ENCODE measurements at regions of chr5 and their contacts with region 1.

Region 1: GRCh38 chr5:150398722-150399523 is 13.8 kb downstream of the CD74 start:
- DNase-seq: peak; percentile 37 to 65 (median 56)
- H3K4me3 ChIP-seq: no peak overlapping the region
- H3K4me3 Mint-ChIP-seq: no peak overlapping the region
- H3K27ac ChIP-seq: peak overlapping the region; percentile 29 to 40
- H3K27ac Mint-ChIP-seq: peak overlapping the region; percentile 15 to 78 (median 66)
- H3K4me1 ChIP-seq: no peaks in the 10 kb centered on the region
- H3K4me1 Mint-ChIP-seq: peaks cover 4% of the 10 kb centered on the region
- H3K27me3 ChIP-seq: no peaks in the 10 kb centered on the region
- H3K27me3 Mint-ChIP-seq: peaks cover 0 to 2% (median 1%) of the 10 kb centered on the region in 3 donors
- CTCF ChIP-seq: peak; percentile 63

Region 2: DNA sequence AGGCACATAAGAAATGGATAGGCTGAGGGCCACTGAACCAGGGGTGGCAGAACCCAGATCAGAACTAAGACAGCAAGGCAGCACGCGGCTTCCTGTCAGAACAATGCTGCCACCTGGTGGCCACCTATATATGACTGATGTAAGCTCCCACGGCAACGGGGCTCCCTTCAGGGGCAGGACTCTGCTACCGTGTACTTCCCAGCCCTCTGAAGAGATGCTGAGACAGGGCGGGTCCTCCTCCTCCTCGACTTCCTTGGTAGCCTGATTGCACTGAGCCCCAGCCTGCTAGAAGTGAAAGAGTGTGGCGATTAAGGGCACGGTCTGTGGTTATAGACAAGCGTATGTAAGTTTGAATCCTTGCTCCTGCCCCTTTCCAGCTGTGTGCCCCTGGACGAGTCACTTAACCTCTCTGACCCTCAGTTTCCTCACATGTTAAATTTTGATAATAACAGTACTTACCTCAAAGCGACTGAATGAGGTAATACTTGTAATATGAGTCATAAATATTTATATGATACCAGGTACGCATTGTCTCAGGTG is 37.3 kb after region 1 on chr5:
- intact Hi-C with region 1: loop called (anchors 5 kb)
- DNase-seq: peak; percentile 84 to 90 (median 88)
- H3K4me3 ChIP-seq: no peak overlapping the region
- H3K4me3 Mint-ChIP-seq: peak overlapping the region in 1 of 2 donors; percentile 64
- H3K27ac ChIP-seq: no peak overlapping the region
- H3K27ac Mint-ChIP-seq: peak overlapping the region in 2 of 7 donors; percentile 5 to 63
- H3K4me1 ChIP-seq: peaks cover 0 to 4% of the 10 kb centered on the region in 2 donors
- H3K4me1 Mint-ChIP-seq: peaks cover 11% of the 10 kb centered on the region
- H3K27me3 ChIP-seq: no peaks in the 10 kb centered on the region
- H3K27me3 Mint-ChIP-seq: no peaks in the 10 kb centered on the region
- CTCF ChIP-seq: peak; percentile 87

Region 3: GRCh38 chr5:150441813-150442698 is 43.1 kb after region 1 on chr5:
- intact Hi-C with region 1: loop called (anchors 5 kb)
- DNase-seq: no peak
- H3K4me3 ChIP-seq: no peak overlapping the region
- H3K4me3 Mint-ChIP-seq: no peak overlapping the region
- H3K27ac ChIP-seq: no peak overlapping the region
- H3K27ac Mint-ChIP-seq: peak overlapping the region in 4 of 7 donors; percentile 11 to 41 (median 35)
- H3K4me1 ChIP-seq: no peaks in the 10 kb centered on the region
- H3K4me1 Mint-ChIP-seq: no peaks in the 10 kb centered on the region
- H3K27me3 ChIP-seq: no peaks in the 10 kb centered on the region
- H3K27me3 Mint-ChIP-seq: no peaks in the 10 kb centered on the region
- CTCF ChIP-seq: no peak

Region 4: GRCh38 chr5:150497274-150497988 is 98.5 kb after region 1 on chr5:
- intact Hi-C with region 1: no loop called
- DNase-seq: peak in 1 of 3 donors; percentile 31
- H3K4me3 ChIP-seq: no peak overlapping the region
- H3K4me3 Mint-ChIP-seq: no peak overlapping the region
- H3K27ac ChIP-seq: peak overlapping the region; percentile 27 to 36
- H3K27ac Mint-ChIP-seq: peak overlapping the region in 6 of 7 donors; percentile 11 to 77 (median 72)
- H3K4me1 ChIP-seq: peaks cover 14 to 16% of the 10 kb centered on the region in 2 donors
- H3K4me1 Mint-ChIP-seq: peaks cover 73% of the 10 kb centered on the region
- H3K27me3 ChIP-seq: no peaks in the 10 kb centered on the region
- H3K27me3 Mint-ChIP-seq: no peaks in the 10 kb centered on the region
- CTCF ChIP-seq: no peak

Region 5: GRCh38 chr5:150763023-150763769 is 364.3 kb after region 1 on chr5:
- intact Hi-C with region 1: no loop called
- DNase-seq: peak; percentile 87 to 96 (median 95)
- H3K4me3 ChIP-seq: peak overlapping the region in 1 of 3 experiments; percentile 55
- H3K4me3 Mint-ChIP-seq: peak overlapping the region in 1 of 2 donors; percentile 81
- H3K27ac ChIP-seq: peak overlapping the region; percentile 86 to 95
- H3K27ac Mint-ChIP-seq: peak overlapping the region; percentile 96 to 99 (median 98)
- H3K4me1 ChIP-seq: peaks cover 78 to 86% of the 10 kb centered on the region in 2 donors
- H3K4me1 Mint-ChIP-seq: peaks cover 67% of the 10 kb centered on the region
- H3K27me3 ChIP-seq: no peaks in the 10 kb centered on the region
- H3K27me3 Mint-ChIP-seq: peaks cover 0 to 1% (median 0%) of the 10 kb centered on the region in 3 donors
- CTCF ChIP-seq: no peak